Activated CD4-positive, alpha-beta T cell treated with anti-CD3 and anti-CD28 coated beads for 36 hours (primary cell): ENCODE measurements at regions of chr11 and their contacts with region 1.

Region 1: GRCh38 chr11:128157423-128158298 is 429.7 kb downstream of the ETS1 start:
- DNase-seq: peak; percentile 68
- ATAC-seq: peak; percentile 91
- H3K4me3 Mint-ChIP-seq: peak overlapping the region; percentile 60
- H3K27ac Mint-ChIP-seq: peak overlapping the region; percentile 86
- H3K4me1 Mint-ChIP-seq: peaks cover 10% of the 10 kb centered on the region
- H3K27me3 Mint-ChIP-seq: no peaks in the 10 kb centered on the region

Region 2: GRCh38 chr11:127627629-127628457 is 529.8 kb before region 1 on chr11:
- CTCF ChIA-PET with region 1: no interaction called
- POLR2A ChIA-PET with region 1: no interaction called
- intact Hi-C with region 1: no loop called
- DNase-seq: no peak
- ATAC-seq: no peak
- H3K4me3 Mint-ChIP-seq: no peak overlapping the region
- H3K27ac Mint-ChIP-seq: no peak overlapping the region
- H3K4me1 Mint-ChIP-seq: no peaks in the 10 kb centered on the region
- H3K27me3 Mint-ChIP-seq: peaks cover 3% of the 10 kb centered on the region

Region 3: GRCh38 chr11:127766734-127767133 is 390.9 kb before region 1 on chr11:
- CTCF ChIA-PET with region 1: no interaction called
- POLR2A ChIA-PET with region 1: no interaction called
- intact Hi-C with region 1: no loop called
- DNase-seq: no peak
- ATAC-seq: no peak
- H3K4me3 Mint-ChIP-seq: no peak overlapping the region
- H3K27ac Mint-ChIP-seq: no peak overlapping the region
- H3K4me1 Mint-ChIP-seq: no peaks in the 10 kb centered on the region
- H3K27me3 Mint-ChIP-seq: peaks cover 7% of the 10 kb centered on the region

Region 4: DNA sequence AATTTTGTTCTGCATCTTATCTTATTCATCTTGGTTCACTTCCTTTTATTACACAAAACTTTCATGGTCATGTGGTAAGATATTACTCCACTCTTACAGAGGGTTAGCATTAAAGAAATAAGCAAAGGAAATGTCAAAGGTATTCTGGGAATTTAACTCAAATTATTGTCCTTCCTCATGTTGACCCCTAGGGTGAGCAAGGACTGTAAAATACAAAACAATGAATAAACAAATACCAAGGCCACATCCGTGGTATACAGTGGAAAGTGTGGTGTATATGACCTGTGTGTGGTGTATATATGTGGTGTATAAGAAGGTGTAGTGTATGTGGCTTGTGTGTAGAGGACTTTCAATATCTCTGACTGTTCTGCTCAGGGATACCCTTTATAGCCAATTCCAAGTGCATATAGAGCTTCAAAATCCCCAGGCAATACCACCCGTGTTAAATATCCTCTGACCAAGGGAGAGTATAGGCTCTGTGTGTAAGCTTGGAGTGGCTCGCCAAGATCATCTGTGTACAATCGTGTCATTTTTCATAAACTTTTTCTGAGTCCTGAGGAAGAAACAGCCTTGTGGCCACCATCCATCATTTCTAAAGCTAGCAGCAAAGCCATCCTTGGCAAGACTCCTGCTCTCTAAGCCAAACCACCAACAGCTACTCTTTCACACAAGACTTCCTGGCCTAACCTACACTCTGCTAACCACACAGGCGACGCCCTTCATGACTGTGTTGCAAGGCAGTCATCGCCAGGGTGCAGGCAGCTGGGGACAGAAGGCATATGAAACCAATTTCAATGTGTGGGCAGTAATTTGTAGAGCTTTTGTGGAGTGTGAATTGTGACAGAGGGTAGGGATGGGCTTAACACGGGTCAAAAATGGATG is 118.3 kb before region 1 on chr11:
- CTCF ChIA-PET with region 1: interaction called, 47 read pairs
- POLR2A ChIA-PET with region 1: no interaction called
- intact Hi-C with region 1: no loop called
- DNase-seq: peak; percentile 88
- ATAC-seq: peak; percentile 94
- H3K4me3 Mint-ChIP-seq: peak overlapping the region; percentile 31
- H3K27ac Mint-ChIP-seq: peak overlapping the region; percentile 85
- H3K4me1 Mint-ChIP-seq: peaks cover 39% of the 10 kb centered on the region
- H3K27me3 Mint-ChIP-seq: no peaks in the 10 kb centered on the region

Region 5: DNA sequence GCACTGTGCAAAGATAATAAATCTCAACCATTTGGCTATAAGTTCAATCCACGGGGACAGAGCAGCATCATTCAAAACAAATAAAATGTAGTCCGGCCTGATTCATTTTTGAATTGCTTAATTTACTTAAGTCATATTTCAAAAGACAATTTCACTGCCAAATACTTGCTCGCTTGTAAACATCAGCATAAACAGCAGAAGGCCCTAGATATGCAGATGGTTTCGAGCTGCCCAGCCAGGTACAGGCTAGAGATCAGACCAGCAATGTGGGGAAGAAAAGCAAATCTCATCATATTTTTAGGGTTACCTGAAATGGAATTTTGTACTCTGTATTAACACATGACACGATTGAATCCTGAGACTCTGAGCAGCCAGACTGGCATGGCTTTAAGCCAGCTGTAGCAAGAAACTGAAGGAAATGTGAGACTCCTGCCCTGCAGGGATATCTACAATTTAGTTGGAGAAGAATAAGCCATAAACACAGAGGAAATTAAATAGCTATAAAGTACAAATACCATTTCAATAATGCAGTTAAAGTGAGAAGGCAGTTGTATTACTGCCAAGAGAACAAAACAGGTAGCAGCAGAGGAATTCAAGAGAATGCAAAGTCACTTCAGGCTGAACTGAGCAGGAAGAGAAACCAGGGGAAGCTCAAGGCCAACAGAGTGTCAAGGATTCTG is 10.6 kb before region 1 on chr11:
- CTCF ChIA-PET with region 1: interaction called, 22 read pairs
- POLR2A ChIA-PET with region 1: no interaction called
- intact Hi-C with region 1: no loop called
- DNase-seq: no peak
- ATAC-seq: no peak
- H3K4me3 Mint-ChIP-seq: no peak overlapping the region
- H3K27ac Mint-ChIP-seq: no peak overlapping the region
- H3K4me1 Mint-ChIP-seq: no peaks in the 10 kb centered on the region
- H3K27me3 Mint-ChIP-seq: no peaks in the 10 kb centered on the region

Region 6: GRCh38 chr11:128279866-128280265 is 122.2 kb after region 1 on chr11:
- CTCF ChIA-PET with region 1: interaction called, 12 read pairs
- POLR2A ChIA-PET with region 1: no interaction called
- intact Hi-C with region 1: no loop called
- DNase-seq: no peak
- ATAC-seq: no peak
- H3K4me3 Mint-ChIP-seq: no peak overlapping the region
- H3K27ac Mint-ChIP-seq: no peak overlapping the region
- H3K4me1 Mint-ChIP-seq: peaks cover 20% of the 10 kb centered on the region
- H3K27me3 Mint-ChIP-seq: no peaks in the 10 kb centered on the region

Region 7: GRCh38 chr11:128809128-128809527 is 651.5 kb after region 1 on chr11:
- CTCF ChIA-PET with region 1: interaction called, 21 read pairs
- POLR2A ChIA-PET with region 1: no interaction called
- intact Hi-C with region 1: no loop called
- DNase-seq: no peak
- ATAC-seq: peak; percentile 65
- H3K4me3 Mint-ChIP-seq: no peak overlapping the region
- H3K27ac Mint-ChIP-seq: peak overlapping the region; percentile 13
- H3K4me1 Mint-ChIP-seq: peaks cover 27% of the 10 kb centered on the region
- H3K27me3 Mint-ChIP-seq: no peaks in the 10 kb centered on the region

Region 8: GRCh38 chr11:128859563-128860441 is 702.1 kb after region 1 on chr11:
- CTCF ChIA-PET with region 1: interaction called, 26 read pairs
- POLR2A ChIA-PET with region 1: no interaction called
- intact Hi-C with region 1: loop called (anchors 1 kb)
- DNase-seq: peak; percentile 89
- ATAC-seq: peak; percentile 96
- H3K4me3 Mint-ChIP-seq: no peak overlapping the region
- H3K27ac Mint-ChIP-seq: no peak overlapping the region
- H3K4me1 Mint-ChIP-seq: peaks cover 4% of the 10 kb centered on the region
- H3K27me3 Mint-ChIP-seq: no peaks in the 10 kb centered on the region